Cardiac septum (tissue), 1 donor: ENCODE measurements at regions of chr1 and their contacts with region 1.

Region 1: GRCh38 chr1:7646981-7647901 is 123.9 kb upstream of the VAMP3 start:
- DNase-seq: no peak

Region 2: GRCh38 chr1:6727535-6727934 is 919.7 kb before region 1 on chr1:
- intact Hi-C with region 1: loop called (anchors 5 kb)
- DNase-seq: no peak

Region 3: GRCh38 chr1:7290971-7291970 is 356.0 kb before region 1 on chr1:
- intact Hi-C with region 1: loop called (anchors 5 kb)
- DNase-seq: peak; percentile 83

Region 4: DNA sequence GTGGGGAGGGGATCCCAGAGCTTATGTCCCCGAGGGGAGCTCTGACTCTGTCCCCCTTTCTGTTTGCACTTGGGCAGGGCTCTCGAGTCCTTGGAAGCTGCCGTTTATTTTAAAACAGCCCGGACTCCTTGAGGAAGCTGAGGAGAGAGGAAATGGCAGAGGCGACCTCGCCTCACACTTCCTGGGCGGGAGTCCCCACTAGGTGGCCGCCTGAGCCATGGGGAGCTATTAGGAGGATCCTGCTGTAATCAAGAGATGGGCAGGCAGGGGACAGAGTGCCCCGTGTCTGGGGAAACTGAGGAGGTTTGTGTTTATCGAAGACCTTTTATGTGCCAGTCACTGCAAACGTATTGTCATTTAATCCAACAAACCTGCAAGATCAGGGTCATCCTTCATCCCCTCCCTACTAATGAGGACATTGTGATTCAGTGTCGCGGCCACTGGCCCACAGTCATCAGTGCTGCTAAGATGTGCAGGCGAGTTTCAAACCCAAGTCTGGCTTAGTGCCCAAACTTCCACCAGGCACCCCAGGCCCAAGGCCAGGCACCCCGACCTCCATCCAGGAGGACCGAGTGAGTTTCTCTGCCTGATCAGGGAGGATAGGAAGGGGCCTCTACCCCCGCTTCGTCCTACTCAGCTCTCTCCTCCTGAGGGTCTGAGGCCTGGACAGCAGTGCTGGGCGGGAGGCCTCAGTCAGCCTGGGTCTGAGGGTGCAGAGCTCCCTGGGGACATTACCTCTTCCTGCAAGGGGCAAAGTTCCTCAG is 193.0 kb before region 1 on chr1:
- intact Hi-C with region 1: loop called (anchors 2 kb)
- DNase-seq: no peak

Region 5: DNA sequence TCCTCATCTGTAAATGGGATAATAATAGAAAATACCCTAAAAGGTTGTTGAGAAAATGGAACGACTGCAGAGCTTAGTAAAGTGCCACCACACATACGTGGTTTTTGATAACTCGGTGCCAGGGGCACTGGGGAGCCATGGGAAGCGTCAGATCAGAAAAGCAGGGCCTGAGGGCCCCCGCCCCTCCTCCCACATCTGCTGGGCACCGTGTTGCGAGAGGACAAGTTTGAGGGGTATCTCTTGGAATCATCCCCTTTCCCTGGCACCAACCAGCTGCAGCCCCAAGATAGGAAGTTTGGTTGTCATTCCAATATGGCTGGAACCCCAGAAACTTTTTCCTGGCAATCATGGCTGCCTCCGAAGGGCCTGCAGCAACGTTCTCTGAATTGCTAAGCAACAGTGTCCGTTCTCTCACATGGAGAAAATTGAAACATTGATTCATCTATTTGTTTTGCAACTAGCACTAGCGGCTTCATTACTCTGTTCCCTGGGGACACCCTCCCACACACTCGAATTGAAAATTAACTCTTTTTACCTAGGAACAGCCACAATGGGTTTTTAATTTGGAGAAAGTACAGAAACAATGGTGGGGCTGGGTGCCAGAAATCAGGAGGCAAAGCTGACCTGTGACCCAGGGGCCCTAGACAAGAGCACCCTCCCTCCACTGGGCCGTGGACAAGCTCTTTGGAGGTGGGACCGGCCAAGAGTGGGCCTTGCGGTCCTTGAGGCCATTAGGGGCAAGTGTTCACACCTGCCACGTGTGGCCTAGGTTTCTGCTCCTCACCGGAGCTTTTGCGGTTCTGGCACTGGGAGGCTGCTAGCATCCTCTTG is 66.1 kb before region 1 on chr1:
- intact Hi-C with region 1: loop called (anchors 5 kb)
- DNase-seq: peak; percentile 63

Region 6: DNA sequence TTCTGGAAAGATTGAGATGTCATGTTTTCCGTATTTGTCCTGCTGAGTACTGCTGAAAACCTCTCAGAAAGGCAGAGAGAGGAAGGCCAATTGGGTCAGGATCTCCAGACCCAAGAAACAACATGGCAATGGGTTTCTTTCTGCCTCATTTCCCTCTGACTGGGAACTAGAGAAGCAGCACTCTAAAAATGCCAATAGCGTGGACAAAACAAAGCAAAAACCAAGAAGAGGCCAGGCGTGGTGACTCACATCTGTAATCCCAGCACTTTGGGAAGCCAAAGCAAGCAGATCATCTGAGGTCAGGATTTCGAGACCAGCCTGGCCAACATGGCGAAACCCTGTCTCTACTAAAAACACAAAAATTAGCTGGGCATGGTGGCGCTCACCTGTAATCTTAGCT is 275.1 kb after region 1 on chr1:
- intact Hi-C with region 1: no loop called
- DNase-seq: no peak